Panc1 (cell line): ENCODE measurements at regions of chr14 and their contacts with region 1.

Region 1: DNA sequence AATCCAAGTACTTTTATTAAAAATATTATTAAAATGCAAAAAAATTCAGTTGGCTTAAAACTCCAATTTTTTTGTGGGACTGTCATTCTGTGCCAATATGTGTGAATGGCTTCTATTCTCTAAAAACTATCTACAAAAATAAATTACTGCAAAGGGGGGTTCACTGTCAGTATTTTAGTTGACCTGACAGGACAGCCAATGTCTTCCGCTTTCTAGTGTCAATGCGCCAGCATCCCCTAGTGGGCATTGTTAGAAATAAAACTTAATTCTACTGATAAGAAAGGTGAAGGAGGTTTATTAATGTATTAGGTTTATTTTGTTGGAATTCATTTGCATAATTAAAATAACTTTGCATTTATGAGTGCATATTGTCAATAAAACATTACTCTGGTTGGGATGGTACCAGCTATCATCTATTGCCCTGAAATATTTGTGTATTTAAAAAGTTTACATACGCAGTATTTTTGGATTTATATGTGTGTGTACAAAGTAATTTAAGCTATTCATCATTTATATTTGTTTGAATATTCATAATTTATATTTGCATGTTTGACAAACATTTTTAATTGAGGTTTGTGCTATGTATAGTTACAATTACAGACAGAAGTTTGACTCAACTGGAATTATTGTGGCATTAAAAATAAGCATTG is 527.2 kb downstream of the FLRT2 start:
- DNase-seq: no peak
- ATAC-seq: no peak
- H3K4me3 ChIP-seq: no peak overlapping the region
- H3K27ac ChIP-seq: no peak overlapping the region
- H3K4me1 ChIP-seq: no peaks in the 10 kb centered on the region
- H3K27me3 ChIP-seq: no peaks in the 10 kb centered on the region
- CTCF ChIP-seq: peak; percentile 83

Region 2: GRCh38 chr14:85402569-85403162 is 654.5 kb before region 1 on chr14:
- CTCF ChIA-PET with region 1: no interaction called
- POLR2A ChIA-PET with region 1: no interaction called
- in situ Hi-C with region 1: no loop called
- intact Hi-C with region 1: loop called (anchors 5 kb)
- DNase-seq: no peak
- ATAC-seq: no peak
- H3K4me3 ChIP-seq: no peak overlapping the region
- H3K27ac ChIP-seq: no peak overlapping the region
- H3K4me1 ChIP-seq: no peaks in the 10 kb centered on the region
- H3K27me3 ChIP-seq: no peaks in the 10 kb centered on the region
- CTCF ChIP-seq: no peak

Region 3: DNA sequence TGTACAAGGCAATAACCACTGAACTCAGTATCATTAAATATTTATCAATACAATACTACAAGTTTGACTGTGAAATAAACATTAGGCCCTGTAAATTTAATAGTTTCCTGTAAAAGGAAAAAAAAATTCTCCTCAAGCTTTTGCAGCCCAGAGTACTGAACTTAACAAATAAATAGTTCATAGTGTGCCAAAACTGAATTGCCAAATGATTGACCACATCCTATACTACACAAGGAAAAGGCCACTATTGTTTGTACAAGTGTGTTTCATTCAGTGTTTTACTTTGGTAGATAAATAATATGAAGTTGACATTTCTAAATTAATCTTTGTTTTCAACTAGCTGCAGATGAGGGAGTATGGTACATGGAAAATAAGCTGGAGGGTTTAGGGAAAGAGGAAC is 147.6 kb before region 1 on chr14:
- CTCF ChIA-PET with region 1: no interaction called
- POLR2A ChIA-PET with region 1: no interaction called
- in situ Hi-C with region 1: no loop called
- intact Hi-C with region 1: no loop called
- DNase-seq: no peak
- ATAC-seq: no peak
- H3K4me3 ChIP-seq: no peak overlapping the region
- H3K27ac ChIP-seq: no peak overlapping the region
- H3K4me1 ChIP-seq: no peaks in the 10 kb centered on the region
- H3K27me3 ChIP-seq: no peaks in the 10 kb centered on the region
- CTCF ChIP-seq: no peak